Activated T-helper 1 cell treated with anti-CD3 and anti-CD28 coated beads, Interleukin-12 subunit alpha, Interleukin-12 subunit beta, Interleukin-2, Interleukin-4 antibody, amounts not matched to agents 30 ng/mL and 10 ng/mL and 1 ng/mL, durations not matched to agents 14 hours and 24 hours and 36 hours (primary cell): ENCODE measurements at regions of chr19 and their contacts with region 1.

Region 1: DNA sequence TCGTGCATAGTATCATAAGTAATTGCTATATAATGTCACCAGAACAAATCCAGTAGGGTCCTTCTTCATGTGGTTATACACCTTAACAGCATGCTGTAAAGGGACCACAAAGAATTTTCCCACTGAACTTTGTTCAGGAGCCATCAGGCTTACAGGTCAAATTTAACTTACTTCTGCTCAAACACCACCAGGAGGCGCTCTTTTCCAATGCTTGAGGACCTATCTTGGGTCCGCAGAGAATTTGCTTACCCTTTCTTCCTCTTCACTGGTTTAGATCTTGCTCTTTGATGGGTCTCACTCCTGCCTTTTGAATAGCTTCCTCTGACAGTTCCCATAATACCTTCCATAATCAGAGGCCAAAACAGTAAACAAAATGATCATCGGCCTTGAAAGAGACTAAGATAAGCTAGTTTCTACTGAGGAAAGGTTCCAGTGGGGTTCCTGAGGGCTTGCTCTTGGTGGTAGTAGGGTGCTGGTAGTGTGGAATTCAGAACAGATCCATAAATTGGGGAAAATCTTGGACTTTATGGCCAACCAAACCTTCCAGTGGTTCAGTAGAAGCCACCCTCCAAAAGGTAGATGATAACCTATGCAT is 37.4 kb downstream of the SCGB2B2 start:
- DNase-seq: peak; percentile 45
- H3K4me3 Mint-ChIP-seq: no peak overlapping the region
- H3K27ac Mint-ChIP-seq: no peak overlapping the region
- H3K4me1 Mint-ChIP-seq: no peaks in the 10 kb centered on the region
- H3K27me3 Mint-ChIP-seq: peaks cover 3% of the 10 kb centered on the region

Region 2: GRCh38 chr19:33894787-33895186 is 744.8 kb before region 1 on chr19:
- intact Hi-C with region 1: no loop called
- DNase-seq: no peak
- H3K4me3 Mint-ChIP-seq: no peak overlapping the region
- H3K27ac Mint-ChIP-seq: no peak overlapping the region
- H3K4me1 Mint-ChIP-seq: no peaks in the 10 kb centered on the region
- H3K27me3 Mint-ChIP-seq: peaks cover 3% of the 10 kb centered on the region

Region 3: GRCh38 chr19:34386645-34387445 is 252.7 kb before region 1 on chr19:
- intact Hi-C with region 1: no loop called
- DNase-seq: no peak
- H3K4me3 Mint-ChIP-seq: no peak overlapping the region
- H3K27ac Mint-ChIP-seq: no peak overlapping the region
- H3K4me1 Mint-ChIP-seq: peaks cover 5% of the 10 kb centered on the region
- H3K27me3 Mint-ChIP-seq: no peaks in the 10 kb centered on the region

Region 4: DNA sequence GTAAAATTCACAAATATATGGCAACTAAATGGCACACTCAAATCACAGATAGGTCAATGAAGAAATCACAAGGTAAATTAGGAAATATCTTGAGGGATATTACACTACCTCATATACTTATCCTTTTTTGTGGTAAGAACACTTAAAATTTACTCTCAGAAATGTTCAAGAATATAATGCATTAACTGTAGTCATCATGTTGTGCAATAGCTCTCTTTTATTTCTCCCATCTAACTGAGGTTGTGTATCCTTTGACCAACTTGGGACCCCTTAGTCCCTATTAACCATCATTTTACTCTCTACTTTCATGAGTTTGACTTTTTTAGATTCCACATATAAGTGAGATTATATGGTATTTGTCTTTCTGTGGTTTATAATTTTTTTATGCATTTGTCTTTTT is 105.4 kb before region 1 on chr19:
- intact Hi-C with region 1: no loop called
- DNase-seq: no peak
- H3K4me3 Mint-ChIP-seq: no peak overlapping the region
- H3K27ac Mint-ChIP-seq: no peak overlapping the region
- H3K4me1 Mint-ChIP-seq: no peaks in the 10 kb centered on the region
- H3K27me3 Mint-ChIP-seq: peaks cover 9% of the 10 kb centered on the region

Region 5: DNA sequence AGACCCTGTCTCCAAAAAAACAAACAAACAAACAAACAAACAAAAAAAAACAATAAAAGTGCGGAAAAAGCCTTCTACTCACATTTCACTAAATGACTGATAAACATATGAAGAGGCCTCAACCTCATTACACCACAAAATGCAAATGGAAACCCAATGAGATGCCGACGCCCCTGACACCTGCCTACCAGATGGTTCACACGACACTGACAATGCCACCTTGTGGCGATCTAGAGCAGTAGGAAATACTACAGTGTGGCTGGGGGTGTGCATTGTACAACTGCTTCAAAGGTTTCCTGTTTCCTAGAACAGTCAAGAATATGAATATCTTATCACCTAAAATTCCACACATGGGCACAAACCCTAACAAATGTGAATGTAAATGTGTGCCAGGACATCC is 23.3 kb after region 1 on chr19:
- intact Hi-C with region 1: loop called (anchors 1 kb)
- DNase-seq: peak; percentile 31
- H3K4me3 Mint-ChIP-seq: no peak overlapping the region
- H3K27ac Mint-ChIP-seq: no peak overlapping the region
- H3K4me1 Mint-ChIP-seq: peaks cover 9% of the 10 kb centered on the region
- H3K27me3 Mint-ChIP-seq: no peaks in the 10 kb centered on the region

Region 6: GRCh38 chr19:34712395-34713261 is 73.0 kb after region 1 on chr19:
- intact Hi-C with region 1: loop called (anchors 1 kb)
- DNase-seq: peak; percentile 43
- H3K4me3 Mint-ChIP-seq: no peak overlapping the region
- H3K27ac Mint-ChIP-seq: no peak overlapping the region
- H3K4me1 Mint-ChIP-seq: peaks cover 5% of the 10 kb centered on the region
- H3K27me3 Mint-ChIP-seq: peaks cover 4% of the 10 kb centered on the region